AG04449 (cell line): ENCODE measurements at regions of chr5 and their contacts with region 1.

Region 1: GRCh38 chr5:139422307-139422893 is 16.9 kb downstream of the DNAJC18 start:
- DNase-seq: no peak
- H3K4me3 ChIP-seq: no peak overlapping the region
- CTCF ChIP-seq: peak; percentile 72

Region 2: DNA sequence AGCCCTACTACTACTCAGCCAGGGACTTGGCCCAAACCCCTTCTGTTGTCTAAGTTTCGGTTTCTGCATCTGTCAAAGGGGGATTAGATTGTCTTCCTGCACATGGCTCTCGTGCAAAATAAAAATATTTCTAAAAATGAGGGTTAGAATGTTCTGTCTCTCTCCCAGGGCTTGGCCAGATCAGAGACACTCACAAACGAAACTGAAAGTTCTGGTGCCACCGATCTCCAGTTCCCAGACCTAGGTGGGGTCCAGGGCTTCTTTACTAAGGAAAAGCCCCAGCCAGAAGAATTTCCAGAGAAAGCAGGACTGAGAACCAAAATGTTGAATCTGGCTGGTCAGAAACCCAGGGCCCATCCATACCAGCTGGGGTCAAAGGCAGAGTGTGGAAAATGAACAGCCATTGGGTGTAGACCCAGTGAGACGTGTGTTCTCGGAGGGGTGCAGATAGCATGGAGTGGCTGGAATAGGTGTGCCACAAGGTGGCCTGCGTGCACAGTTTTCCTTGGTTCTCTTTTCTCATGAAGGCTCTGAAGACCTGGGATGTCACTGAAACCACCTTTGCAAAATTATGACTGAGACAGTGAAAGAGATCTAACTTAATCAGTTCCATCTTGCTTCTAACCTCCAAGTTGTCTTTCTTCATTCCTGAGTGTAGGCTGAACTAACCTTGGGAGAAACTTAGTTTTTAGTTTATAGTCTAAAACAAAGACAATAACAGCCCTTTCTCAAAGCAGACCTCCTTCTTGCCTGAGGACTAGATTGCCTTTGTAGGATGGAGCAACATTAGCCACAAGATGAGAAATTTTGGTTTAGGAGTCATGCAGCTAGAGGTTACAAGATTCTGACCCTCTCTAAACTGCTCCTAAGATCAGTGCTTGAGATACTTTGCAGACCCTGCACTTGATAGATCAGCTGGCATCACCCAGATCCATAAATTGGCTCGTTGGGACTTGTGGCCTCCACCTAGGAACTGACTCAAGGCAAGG is 37.0 kb before region 1 on chr5:
- CTCF ChIA-PET with region 1: no interaction called
- POLR2A ChIA-PET with region 1: no interaction called
- DNase-seq: no peak
- H3K4me3 ChIP-seq: no peak overlapping the region
- CTCF ChIP-seq: no peak

Region 3: DNA sequence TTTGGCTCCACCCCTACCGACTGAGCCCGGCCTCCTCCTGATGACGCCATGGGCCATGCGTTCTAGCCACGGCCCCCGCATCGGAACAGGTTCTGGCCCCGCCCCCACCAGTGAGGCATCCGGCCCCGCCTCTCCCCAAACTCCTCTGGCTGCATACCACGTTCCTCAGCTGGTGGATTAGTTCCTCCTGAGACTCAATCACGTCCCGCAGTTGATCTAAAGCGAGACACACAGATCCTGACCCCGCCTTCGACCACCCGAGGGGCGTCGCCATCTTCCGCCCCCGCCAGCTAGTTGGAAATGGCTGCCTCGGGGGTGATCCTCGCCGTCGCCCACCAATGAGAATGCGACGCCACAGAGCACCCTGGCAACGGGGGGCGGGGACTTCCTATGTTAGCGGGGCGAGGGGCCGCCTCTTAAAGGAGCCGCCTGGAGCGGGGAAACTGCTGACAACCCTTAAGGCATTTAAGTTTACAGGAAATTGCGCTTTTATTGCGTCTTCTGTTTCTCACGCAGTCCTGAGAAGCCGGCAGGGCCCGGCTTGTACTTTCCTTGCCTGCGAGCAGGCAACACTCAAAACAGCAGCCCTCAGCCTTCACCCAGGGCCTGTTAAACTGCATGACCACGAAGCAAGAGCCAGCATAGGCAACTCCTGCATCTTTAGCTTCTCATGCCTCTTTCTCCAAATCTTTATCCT is 18.5 kb before region 1 on chr5 and contains the start of gene SPATA24:
- CTCF ChIA-PET with region 1: interaction called, 93 read pairs
- POLR2A ChIA-PET with region 1: interaction called, 3 read pairs
- DNase-seq: peak; percentile 84
- H3K4me3 ChIP-seq: peak within 1 kb of the TSS; percentile 69
- CTCF ChIP-seq: no peak

Region 4: GRCh38 chr5:139445325-139446070 is 23.1 kb after region 1 on chr5:
- CTCF ChIA-PET with region 1: interaction called, 18 read pairs
- POLR2A ChIA-PET with region 1: interaction called, 4 read pairs
- DNase-seq: peak; percentile 79
- H3K4me3 ChIP-seq: no peak overlapping the region
- CTCF ChIP-seq: no peak

Region 5: DNA sequence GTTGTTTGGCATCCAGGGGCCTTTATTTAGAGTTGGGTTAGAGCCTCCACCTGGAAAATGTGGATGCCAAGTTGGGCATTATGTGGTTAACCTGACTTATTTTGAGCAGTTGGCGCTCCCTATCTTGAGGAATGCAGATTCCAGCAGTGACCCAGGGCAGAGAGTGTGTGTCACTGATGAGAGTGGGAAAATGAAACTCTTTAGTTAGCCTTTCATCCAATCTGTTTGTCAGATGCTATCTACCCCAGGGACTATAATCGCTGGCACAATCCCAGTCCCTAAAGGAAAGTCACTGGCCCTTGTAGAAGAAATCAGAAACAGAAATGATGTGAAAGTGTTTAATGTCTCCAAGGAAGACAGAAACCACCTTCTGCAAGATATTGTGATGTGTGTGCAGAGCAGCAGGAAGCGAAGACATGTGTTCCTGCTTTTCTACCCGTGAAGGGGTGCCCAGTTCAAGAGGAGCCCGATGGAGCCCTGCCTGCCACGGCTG is 70.3 kb after region 1 on chr5:
- CTCF ChIA-PET with region 1: interaction called, 26 read pairs
- POLR2A ChIA-PET with region 1: no interaction called
- DNase-seq: no peak
- H3K4me3 ChIP-seq: no peak overlapping the region
- CTCF ChIP-seq: no peak

Region 6: DNA sequence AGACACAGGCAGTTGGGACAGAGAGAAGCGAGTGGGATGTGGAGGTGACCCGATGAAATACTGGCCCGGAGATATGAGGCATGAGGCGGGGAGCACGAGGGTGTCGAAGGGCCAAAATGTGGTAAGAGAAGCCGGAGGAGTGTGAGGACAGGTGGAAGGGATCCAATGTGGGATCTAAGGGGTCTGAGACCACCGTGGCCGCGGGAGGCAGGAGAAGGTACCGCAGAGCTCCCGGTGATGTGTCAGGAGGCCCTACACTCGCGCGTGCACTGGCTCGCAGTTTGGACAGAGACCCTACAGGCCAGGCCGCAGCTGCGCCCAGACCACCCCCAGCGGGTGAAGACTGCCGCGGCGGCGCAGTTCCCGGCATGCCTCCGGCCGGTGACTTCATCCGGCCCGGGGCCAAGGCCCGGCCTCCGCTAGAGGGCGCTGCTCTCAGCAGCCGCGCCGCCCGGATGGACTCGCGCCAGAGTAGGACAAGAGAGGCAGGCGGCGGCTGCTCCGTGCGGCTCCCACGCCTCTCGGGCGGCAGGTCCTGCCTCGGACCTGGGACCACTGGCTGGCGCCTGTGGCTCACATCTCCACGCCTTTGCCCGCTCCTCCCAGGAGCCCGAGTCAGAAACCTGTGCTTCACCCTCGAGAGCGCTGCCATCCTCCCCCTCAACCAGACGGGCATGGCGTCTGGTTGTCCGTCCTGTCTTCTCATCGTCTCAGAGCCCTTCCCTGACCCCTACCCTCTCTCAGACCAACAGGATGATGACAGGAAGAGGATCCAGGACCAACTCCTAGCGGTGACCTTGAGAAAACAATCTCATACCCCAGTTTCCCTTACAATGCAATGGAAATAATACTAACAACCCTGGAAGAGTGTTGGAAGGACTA is 95.5 kb after region 1 on chr5:
- CTCF ChIA-PET with region 1: interaction called, 730 read pairs
- POLR2A ChIA-PET with region 1: interaction called, 4 read pairs
- DNase-seq: no peak
- H3K4me3 ChIP-seq: peak overlapping the region; percentile 64
- CTCF ChIP-seq: peak; percentile 94

Region 7: GRCh38 chr5:139574641-139575312 is 152.4 kb after region 1 on chr5:
- CTCF ChIA-PET with region 1: interaction called, 12 read pairs
- POLR2A ChIA-PET with region 1: no interaction called
- DNase-seq: no peak
- H3K4me3 ChIP-seq: no peak overlapping the region
- CTCF ChIP-seq: peak; percentile 46